A549 (cell line): ENCODE measurements at regions of chr12 and their contacts with region 1.

Region 1: DNA sequence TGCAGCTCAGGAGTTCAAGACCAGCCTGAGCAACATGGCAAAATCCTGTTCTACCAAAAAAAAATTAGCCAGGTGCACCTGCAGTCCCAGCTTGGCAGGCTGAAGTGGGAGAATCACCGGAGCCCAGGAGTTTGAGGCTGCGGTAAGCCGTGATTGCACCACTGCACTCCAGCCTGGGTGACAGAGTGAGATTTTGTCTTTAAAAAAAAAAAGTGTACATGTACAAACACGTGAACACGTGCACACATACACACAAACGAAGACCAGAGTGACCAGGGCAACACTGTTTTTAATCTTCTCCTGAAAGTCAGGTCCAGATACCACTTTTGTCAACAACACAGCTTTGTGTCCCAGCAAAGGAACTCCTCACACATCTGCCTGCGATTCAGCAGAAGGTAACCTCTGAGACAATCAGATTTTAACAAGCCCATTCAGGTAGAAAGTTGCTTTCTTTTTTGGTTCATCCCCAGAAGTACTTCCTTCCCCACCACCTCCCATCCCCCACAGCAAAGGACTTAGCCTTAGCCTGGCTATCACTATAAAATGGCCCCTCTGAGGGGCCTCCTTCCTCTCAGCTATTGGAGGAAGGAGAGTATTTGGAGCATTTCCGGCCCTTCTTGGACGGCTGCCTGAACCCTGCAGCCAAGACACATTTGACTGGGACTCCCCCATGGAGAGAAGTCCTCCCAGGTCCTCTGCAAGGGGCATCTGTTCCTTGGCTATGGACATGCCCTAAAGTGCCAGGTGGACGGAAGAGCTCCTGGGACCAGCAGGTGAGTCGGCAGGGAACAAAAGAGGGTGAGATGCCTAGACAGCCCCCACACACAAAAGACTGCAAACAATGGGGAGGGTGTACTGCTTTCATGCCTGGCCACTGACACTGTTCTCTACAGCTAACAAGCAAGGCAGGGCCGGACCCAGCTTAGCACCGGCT is 9.8 kb downstream of the CTDSP2 start:
- DNase-seq: no peak
- ATAC-seq: peak in 1 of 2 experiments; percentile 12; a peak in 2 of 6 replicates
- H3K4me3 ChIP-seq: no peak overlapping the region
- H3K27ac ChIP-seq: peak overlapping the region in 1 of 2 experiments; percentile 2; a peak in 2 of 6 replicates
- H3K4me1 ChIP-seq: peaks cover 38% of the 10 kb centered on the region
- CTCF ChIP-seq: no peak
- EP300 ChIP-seq: no peak
- POLR2A ChIP-seq: no peak
- RAD21 ChIP-seq: no peak

Region 2: GRCh38 chr12:57741844-57742738 is 94.6 kb before region 1 on chr12:
- CTCF ChIA-PET with region 1: no interaction called
- POLR2A ChIA-PET with region 1: no interaction called
- DNase-seq: peak in 1 of 2 experiments; percentile 52
- ATAC-seq: no peak
- H3K4me3 ChIP-seq: no peak overlapping the region
- H3K27ac ChIP-seq: no peak overlapping the region
- H3K4me1 ChIP-seq: peaks cover 30% of the 10 kb centered on the region
- CTCF ChIP-seq: no peak
- EP300 ChIP-seq: no peak
- POLR2A ChIP-seq: no peak
- RAD21 ChIP-seq: no peak

Region 3: DNA sequence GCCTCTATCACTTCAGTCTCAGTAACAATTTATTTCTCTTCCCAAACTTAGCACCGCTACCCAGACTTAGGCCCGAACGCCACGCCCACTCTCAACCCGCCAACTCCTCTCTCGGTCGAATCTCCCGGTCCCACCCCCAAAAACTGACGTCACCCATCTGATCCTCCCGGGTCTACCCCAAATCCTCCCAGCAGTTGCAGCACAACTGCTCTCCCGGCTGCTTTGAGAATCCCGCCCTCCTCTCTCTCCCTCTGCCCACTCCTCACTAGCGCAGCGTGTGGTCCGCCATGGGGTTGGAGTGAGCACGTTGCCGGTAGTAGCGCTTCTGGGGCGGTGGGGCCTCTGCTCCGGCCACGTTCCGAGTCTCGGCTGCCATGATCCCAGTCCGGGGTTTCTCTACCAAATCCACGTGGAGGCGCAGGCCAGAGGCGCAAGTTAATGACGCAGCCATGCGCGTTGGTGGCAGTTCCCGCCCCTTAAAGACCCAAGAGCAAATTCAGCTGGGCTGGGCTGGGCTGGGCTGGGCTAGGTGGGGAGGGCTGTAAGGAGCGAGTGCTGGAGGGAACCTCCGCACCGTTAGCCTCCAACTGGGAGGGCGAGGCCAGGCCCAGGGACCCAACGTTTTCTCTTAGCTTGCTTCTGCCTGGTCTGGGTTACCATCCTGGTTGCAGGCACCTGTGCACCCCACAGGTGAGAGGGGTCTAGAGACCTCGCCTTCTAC is 64.8 kb before region 1 on chr12 and contains the start of gene METTL1:
- CTCF ChIA-PET with region 1: no interaction called
- POLR2A ChIA-PET with region 1: no interaction called
- DNase-seq: peak; percentile 96 to 99
- ATAC-seq: peak; percentile 79 to 91
- H3K4me3 ChIP-seq: peak within 1 kb of the TSS; percentile 77
- H3K27ac ChIP-seq: peak within 1 kb of the TSS; percentile 78 to 94
- H3K4me1 ChIP-seq: peaks cover 19% of the 10 kb centered on the region
- CTCF ChIP-seq: no peak
- EP300 ChIP-seq: no peak
- POLR2A ChIP-seq: peak; percentile 88
- RAD21 ChIP-seq: no peak
- polyA plus RNA-seq, gene METTL1: 60.2 and 71.3 TPM in 2 replicates

Region 4: GRCh38 chr12:57803319-57803893 is 33.3 kb before region 1 on chr12:
- CTCF ChIA-PET with region 1: interaction called, 17 read pairs
- POLR2A ChIA-PET with region 1: no interaction called
- DNase-seq: peak; percentile 53 to 69
- ATAC-seq: peak; percentile 86 to 91
- H3K4me3 ChIP-seq: no peak overlapping the region
- H3K27ac ChIP-seq: no peak overlapping the region
- H3K4me1 ChIP-seq: no peaks in the 10 kb centered on the region
- CTCF ChIP-seq: peak; percentile 70
- EP300 ChIP-seq: no peak
- POLR2A ChIP-seq: no peak
- RAD21 ChIP-seq: peak; percentile 61 to 63

Region 5: DNA sequence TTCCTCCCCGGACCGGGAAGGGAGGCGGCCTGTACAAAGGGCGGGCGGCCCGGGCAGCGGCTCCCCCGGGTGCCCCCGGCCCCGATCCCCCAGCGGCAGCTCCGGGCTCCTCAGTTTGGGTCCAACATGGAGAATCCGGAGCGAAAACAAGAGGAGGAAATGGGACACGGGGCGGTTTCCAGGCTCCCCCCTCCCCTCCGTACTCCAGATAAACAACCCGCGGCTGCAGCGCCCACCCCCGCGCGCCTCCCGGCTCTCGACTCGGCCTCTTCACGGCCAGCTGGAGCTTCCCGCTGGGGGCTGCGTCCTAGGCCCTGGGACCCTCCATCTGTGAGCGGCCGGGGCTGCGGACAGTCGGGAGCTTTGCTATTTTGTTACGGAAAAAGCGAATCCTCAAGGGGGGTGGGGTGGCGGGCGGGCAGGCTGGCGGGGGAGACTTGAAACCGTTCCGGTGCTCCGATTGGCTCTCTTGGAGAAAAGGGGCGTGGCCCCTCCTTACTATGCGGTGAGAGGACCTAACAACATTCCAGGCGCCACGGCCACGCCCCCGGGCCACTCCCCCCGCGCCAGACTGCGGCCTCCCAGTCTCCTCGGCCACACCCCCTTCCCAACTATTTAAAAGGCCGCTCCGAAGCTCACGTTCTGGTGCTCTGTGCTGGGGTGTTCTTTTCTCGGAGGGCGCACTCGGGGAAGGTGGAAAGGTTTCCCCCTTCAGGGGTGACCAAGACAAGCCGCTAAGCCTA is 10.0 kb after region 1 on chr12 and contains the start of gene CTDSP2:
- CTCF ChIA-PET with region 1: interaction called, 29 read pairs
- POLR2A ChIA-PET with region 1: interaction called, 5 read pairs
- DNase-seq: peak; percentile 99
- ATAC-seq: peak; percentile 66 to 82
- H3K4me3 ChIP-seq: peak within 1 kb of the TSS; percentile 97
- H3K27ac ChIP-seq: peak within 1 kb of the TSS; percentile 90 to 100
- H3K4me1 ChIP-seq: peaks cover 35% of the 10 kb centered on the region
- CTCF ChIP-seq: no peak
- EP300 ChIP-seq: no peak
- POLR2A ChIP-seq: peak; percentile 44
- RAD21 ChIP-seq: no peak
- polyA plus RNA-seq, gene CTDSP2: 87.7 and 114 TPM in 2 replicates

Region 6: DNA sequence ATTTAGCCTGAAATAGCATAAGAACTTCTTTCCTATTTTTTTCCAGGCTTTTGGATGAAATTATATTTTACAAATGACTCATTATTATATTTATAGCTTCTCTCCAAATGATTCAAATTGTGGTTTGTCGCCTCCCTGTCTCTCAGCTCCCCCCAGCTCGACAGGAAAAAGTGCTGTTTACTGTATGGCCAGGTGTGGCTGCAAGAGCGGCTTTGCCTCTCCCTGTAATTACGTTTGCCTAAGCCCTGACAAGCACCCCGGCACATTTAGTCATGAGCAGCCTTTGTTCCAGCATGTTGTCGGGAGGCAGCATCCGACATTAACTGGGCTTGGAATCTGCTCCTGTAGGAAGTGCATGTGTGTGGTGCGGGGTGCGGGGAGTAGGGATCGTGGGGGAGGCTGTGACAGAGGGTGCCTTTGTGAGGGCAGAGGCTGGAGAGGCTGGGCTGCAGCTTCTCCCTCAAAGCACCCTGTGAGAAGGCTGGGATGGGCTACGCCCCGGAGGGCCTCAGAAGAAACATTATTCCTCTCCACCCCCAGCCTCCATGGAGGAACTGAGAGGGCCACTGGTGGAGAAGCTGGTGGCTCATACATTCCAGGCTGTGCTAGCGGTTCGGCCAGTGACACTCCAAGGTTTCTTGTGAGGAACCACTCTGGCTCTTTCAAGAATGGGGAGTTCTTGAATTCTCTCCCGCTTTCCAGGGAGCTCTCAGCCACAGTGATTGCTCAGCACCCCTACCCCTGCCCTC is 51.9 kb after region 1 on chr12:
- CTCF ChIA-PET with region 1: interaction called, 87 read pairs
- POLR2A ChIA-PET with region 1: interaction called, 3 read pairs
- DNase-seq: no peak
- ATAC-seq: peak; percentile 27 to 48; a peak in 3 of 6 replicates
- H3K4me3 ChIP-seq: no peak overlapping the region
- H3K27ac ChIP-seq: peak overlapping the region; percentile 60 to 84
- H3K4me1 ChIP-seq: peaks cover 53% of the 10 kb centered on the region
- CTCF ChIP-seq: no peak
- EP300 ChIP-seq: no peak
- POLR2A ChIP-seq: no peak
- RAD21 ChIP-seq: no peak

Region 7: DNA sequence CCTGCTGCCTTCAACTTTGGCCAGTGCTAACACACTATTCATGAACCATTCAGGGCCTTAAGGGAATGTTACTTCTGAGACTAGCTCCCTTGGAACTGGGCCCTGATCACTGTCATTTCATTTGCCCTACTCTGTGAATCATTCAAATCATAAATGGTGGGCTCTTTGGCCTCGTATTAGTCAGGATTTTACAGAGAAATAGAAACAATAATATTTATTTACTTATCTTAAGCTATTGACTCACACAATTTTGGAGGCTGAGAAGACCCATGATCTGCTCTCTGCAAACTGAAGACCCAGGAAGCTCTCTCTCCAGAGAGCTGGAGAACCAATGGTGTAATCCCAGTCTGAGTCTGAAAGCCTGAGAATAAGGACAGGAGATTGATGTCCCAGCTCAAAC is 685.1 kb after region 1 on chr12:
- CTCF ChIA-PET with region 1: no interaction called
- POLR2A ChIA-PET with region 1: no interaction called
- DNase-seq: no peak
- ATAC-seq: peak in 1 of 2 experiments; percentile 69; a peak in 2 of 6 replicates
- H3K4me3 ChIP-seq: no peak overlapping the region
- H3K27ac ChIP-seq: peak overlapping the region in 1 of 2 experiments; percentile 42; a peak in 1 of 6 replicates
- H3K4me1 ChIP-seq: peaks cover 4% of the 10 kb centered on the region; the same call in 1 of the 3 replicates
- CTCF ChIP-seq: no peak
- EP300 ChIP-seq: no peak
- POLR2A ChIP-seq: no peak
- RAD21 ChIP-seq: no peak